Mammary epithelial cell (primary cell): ENCODE measurements at regions of chr10 and their contacts with region 1.

Region 1: DNA sequence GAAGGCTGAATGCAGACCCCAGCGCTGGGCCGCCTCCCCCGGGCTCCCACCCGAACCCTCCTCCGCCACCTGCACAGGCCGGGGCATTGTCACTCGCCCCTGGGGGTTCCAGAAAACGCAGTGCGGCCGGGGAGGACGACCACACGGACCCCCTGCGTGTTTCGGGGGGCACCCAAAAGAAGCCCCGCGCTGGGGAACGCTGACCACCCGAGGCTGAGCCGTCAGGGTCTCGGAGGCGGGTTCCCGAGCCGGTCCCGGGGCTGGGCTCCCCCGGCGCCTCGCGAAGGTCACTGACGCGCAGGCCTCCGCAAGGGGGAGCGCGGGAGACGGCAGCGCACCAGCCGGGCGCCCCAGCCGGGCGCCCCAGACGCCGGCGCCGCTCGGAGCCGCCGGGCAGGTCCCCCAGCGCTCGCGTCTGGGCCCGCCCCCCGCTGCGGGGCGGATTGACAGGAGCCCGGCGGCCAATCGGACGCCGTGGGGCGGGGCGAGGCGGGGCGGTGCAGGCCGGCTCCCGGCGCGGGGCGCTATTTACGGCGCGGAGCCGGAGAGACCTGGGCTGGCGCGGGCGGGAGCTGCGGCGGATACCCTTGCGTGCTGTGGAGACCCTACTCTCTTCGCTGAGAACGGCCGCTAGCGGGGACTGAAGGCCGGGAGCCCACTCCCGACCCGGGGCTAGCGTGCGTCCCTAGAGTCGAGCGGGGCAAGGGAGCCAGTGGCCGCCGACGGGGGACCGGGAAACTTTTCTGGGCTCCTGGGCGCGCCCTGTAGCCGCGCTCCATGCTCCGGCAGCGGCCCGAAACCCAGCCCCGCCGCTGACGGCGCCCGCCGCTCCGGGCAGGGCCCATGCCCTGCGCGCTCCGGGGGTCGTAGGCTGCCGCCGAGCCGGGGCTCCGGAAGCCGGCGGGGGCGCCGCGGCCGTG is at the start of gene BAMBI:
- DNase-seq: peak; percentile 89
- H3K4me3 ChIP-seq: peak within 1 kb of the TSS; percentile 78 to 84 (median 83)
- H3K27ac ChIP-seq: peak within 1 kb of the TSS; percentile 44
- H3K4me1 ChIP-seq: peaks cover 29% of the 10 kb centered on the region
- H3K27me3 ChIP-seq: no peaks in the 10 kb centered on the region
- CTCF ChIP-seq: peak; percentile 19 to 64
- total RNA-seq, gene BAMBI: 4.2 to 7.0 TPM

Region 2: DNA sequence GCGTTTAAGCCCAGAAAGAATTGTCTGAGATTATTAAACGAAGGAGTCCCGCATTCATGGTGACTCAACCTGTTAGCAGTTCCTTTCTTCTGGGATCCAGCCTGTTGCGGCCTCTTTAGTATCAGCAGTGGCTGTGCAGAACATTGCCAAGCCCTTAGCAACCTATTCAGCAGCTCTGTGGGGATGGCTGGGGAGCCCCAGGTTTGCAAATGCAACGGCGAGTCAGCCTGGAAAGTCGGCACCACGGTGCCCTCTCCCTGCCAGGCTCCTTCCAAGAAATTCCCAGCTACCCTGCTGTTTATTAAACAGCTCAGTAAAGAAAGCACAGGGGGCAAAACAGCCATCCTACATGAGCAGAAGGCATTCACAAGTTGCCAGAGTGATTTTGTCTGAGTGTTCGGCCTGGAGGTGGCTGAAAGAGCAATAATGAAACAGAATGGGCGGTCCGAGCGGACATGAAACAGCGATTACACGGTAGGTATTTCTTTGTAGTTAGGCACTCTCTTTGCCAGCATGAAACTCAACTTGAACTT is 198.4 kb after region 1 on chr10:
- CTCF ChIA-PET with region 1: no interaction called
- dilution Hi-C with region 1: no loop called
- in situ Hi-C with region 1: no loop called
- intact Hi-C with region 1: no loop called
- DNase-seq: no peak
- H3K4me3 ChIP-seq: no peak overlapping the region
- H3K27ac ChIP-seq: no peak overlapping the region
- H3K4me1 ChIP-seq: no peaks in the 10 kb centered on the region
- H3K27me3 ChIP-seq: no peaks in the 10 kb centered on the region
- CTCF ChIP-seq: no peak

Region 3: DNA sequence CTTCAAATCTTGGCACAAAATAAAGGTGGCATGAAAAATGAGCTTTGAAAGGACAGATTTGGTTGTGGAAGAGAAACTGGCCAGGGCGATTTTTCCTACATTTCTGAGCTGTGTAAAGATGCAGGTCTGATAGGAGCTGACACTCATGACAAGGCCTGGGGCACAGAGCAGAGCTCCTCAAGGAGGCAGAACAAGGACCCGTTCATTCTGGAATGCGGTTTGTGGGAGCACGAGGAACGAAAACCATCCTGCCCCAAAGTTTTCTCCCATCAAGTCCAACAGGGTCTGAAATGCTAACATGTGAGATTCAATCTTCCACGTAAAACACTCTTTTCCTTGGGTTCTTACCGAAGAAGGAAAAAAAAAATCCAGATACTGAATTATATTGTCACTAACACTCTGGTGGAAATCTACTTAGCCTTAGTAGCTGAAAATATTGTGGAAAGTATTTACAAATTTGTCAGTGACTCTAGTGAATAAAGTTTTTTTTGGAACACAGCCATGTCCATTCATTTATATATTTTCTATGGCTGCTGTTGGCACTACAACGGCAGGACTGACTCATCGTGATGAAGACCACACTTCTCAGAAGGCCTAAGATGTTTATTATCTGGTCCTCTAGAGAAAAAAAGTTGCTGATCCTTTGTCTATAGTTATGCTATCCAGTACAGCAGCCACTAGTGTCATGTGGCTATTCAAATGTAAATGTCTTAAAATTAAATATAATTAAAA is 215.8 kb after region 1 on chr10:
- CTCF ChIA-PET with region 1: no interaction called
- dilution Hi-C with region 1: no loop called
- in situ Hi-C with region 1: no loop called
- intact Hi-C with region 1: loop called (anchors 5 kb)
- DNase-seq: peak; percentile 47
- H3K4me3 ChIP-seq: no peak overlapping the region
- H3K27ac ChIP-seq: no peak overlapping the region
- H3K4me1 ChIP-seq: peaks cover 4% of the 10 kb centered on the region
- H3K27me3 ChIP-seq: no peaks in the 10 kb centered on the region
- CTCF ChIP-seq: no peak

Region 4: DNA sequence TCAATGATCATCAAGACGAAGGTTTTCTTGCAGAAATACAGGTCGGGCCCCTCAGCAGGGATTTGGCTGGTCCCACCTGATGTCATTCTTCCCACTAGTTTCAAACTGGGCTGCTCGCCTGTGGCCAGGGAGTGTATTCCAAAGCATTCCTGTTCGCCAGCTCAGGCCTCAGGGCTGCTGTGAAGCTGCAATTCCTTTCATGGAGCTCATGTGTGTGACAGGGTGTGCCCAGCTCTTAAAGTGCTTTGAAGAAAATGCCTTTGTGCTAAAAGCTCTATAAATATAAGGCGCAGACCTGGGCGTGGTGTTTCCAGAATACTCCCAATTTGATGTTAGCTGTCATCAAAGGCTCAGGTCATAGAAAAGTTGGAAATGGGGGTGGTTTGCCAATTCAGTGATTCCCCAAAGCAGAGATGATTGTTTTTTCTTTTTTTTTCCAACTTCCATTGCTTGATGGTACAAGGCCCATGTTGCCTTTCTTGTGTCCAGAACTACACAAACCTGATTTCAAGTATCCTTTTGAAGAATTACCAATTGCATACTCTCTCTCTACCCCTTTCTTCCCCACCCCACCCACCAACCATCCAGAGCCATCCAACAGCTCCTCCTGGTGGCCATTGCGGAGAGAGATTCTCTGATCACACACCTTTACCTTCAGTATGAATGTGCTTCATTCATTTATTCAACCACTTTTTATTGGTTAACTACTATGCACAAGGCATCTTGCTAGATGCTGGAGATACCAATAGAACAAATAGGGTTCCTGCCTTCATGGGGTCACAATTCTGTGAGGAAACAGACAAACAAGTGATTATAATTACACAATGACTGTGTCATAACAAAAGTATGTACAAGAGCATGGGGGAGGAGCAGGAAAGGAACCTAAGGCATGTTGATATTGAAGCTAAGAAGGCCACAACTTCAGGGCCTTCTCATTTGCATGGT is 314.4 kb after region 1 on chr10:
- CTCF ChIA-PET with region 1: interaction called, 3 read pairs
- dilution Hi-C with region 1: no loop called
- in situ Hi-C with region 1: loop called in 1 of 2 experiments (anchors 5 kb)
- intact Hi-C with region 1: loop called (anchors 1 kb)
- DNase-seq: peak; percentile 56
- H3K4me3 ChIP-seq: no peak overlapping the region
- H3K27ac ChIP-seq: no peak overlapping the region
- H3K4me1 ChIP-seq: peaks cover 17% of the 10 kb centered on the region
- H3K27me3 ChIP-seq: no peaks in the 10 kb centered on the region
- CTCF ChIP-seq: peak; percentile 82

Region 5: DNA sequence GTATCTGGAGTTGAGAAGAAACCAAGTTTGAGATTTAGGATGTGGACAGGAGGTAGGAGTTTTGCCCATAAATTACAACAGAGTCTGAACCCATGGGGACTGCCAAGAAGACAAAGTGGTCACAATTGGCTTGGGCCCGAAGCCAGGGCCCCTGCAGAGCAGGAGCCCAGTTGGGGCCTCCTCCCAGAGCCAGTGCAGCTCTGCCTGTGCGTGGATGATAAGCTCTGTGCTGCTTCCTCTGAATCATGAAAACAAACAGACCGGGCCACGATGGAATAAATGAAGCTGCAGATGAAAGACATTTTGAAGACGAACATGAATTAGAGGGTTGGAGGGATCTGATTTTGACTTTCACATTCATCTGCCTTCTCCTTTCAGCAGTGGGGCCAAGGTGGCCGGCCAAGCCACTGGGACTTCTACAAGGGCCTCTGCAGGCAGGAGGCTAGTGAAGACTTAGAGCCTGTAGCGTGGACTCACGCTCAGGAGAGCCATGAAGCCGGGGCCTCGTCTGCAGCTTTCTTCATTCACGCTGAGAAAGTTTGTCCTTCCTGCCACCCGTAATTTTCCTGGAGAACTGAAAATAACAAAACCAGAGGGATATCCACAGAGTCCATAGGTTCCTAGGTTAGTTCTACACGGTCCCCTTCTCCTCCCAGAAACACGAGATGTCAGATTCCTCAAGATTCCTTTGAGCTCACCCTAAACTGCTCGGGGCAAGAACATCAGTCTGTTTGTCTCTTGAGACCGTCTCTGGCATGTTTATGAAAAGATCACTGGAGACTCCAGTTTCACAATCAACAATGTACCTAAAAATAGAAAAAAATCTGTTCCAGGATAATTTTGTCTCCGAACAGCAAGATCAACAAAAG is 455.0 kb after region 1 on chr10:
- CTCF ChIA-PET with region 1: no interaction called
- dilution Hi-C with region 1: no loop called
- in situ Hi-C with region 1: no loop called
- intact Hi-C with region 1: loop called (anchors 1 kb)
- DNase-seq: no peak
- H3K4me3 ChIP-seq: no peak overlapping the region
- H3K27ac ChIP-seq: no peak overlapping the region
- H3K4me1 ChIP-seq: peaks cover 4% of the 10 kb centered on the region
- H3K27me3 ChIP-seq: no peaks in the 10 kb centered on the region
- CTCF ChIP-seq: no peak

Region 6: GRCh38 chr10:29239569-29240472 is 562.6 kb after region 1 on chr10:
- CTCF ChIA-PET with region 1: no interaction called
- dilution Hi-C with region 1: no loop called
- in situ Hi-C with region 1: no loop called
- intact Hi-C with region 1: loop called (anchors 5 kb)
- DNase-seq: no peak
- H3K4me3 ChIP-seq: no peak overlapping the region
- H3K27ac ChIP-seq: no peak overlapping the region
- H3K4me1 ChIP-seq: no peaks in the 10 kb centered on the region
- H3K27me3 ChIP-seq: peaks cover 7% of the 10 kb centered on the region
- CTCF ChIP-seq: peak; percentile 30 to 48

Region 7: DNA sequence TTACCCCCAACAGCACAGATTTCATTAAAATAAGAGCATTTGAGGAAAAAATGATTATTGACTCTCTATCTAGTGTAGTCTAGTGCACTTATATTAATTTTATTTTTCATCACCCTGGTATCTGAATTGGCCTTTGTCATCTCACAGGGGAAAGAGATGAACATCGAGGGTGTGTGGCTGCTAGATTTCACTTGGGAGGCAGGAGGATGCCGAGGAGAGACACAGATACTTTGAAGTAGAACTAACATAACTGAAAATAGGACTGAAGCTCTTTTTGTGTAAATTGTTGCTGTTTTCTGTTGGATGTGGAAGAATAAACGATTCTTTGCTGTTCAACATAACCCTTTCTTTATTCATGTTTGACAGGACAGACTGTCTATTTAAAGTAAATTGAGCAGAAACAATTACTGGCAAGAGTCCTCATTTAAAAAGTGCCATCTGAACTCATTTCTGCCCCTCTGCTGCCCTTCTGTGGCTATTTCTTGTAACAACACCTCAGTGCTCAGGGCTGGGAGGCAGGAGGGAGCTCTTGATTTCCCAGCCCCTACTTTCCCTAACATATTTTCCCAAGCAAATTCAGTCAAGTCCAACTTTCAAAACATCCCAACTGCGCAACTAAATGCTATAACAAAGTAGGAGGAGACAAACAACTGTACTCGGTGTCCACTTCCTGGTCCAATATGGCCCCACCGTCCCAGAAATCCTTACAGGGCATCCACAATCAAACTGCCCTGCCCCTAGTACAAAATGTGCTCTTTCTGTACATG is 627.2 kb after region 1 on chr10:
- CTCF ChIA-PET with region 1: no interaction called
- dilution Hi-C with region 1: no loop called
- in situ Hi-C with region 1: no loop called
- intact Hi-C with region 1: loop called (anchors 1 kb)
- DNase-seq: peak; percentile 43
- H3K4me3 ChIP-seq: no peak overlapping the region
- H3K27ac ChIP-seq: no peak overlapping the region
- H3K4me1 ChIP-seq: no peaks in the 10 kb centered on the region
- H3K27me3 ChIP-seq: no peaks in the 10 kb centered on the region
- CTCF ChIP-seq: peak; percentile 77 to 91